T-cell (primary cell): ENCODE measurements at regions of chr13 and their contacts with region 1.

Region 1: DNA sequence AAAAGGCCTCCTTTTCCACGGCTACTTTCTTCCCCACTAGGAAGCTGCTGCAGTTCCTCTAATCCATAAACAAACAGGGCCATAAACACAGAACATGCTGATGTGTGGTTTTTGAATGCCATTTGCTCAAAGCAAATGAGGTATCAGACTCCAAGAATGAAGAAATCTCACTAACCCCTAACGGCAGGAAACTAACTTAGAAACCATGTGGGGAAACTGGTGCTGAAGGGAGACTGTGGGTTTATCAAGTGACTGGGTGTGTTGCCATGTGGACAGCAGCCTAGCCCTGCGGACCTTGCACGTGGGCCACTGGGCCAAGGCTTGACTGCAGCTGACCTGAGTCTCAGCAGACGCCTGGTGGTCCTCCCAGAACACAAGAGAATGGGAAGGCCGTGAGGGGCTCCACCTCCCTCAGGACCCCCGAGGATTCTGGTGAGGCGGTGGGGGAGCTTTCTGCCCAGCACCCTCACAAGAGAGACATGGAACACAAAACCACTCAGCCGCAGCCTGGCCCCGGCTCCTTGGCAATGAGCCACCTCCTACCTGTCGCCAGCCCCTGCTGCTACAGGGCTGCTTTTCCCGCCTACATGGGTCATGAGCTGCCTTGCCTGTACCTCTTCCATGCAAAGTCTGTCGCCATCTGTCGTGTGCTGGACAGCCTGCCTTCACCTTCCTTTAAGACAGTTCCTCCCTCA is 10.6 kb downstream of the SLC15A1 start:
- DNase-seq: no peak
- ATAC-seq: no peak
- H3K4me3 ChIP-seq: no peak overlapping the region
- H3K4me3 Mint-ChIP-seq: no peak overlapping the region
- H3K27ac ChIP-seq: no peak overlapping the region
- H3K27ac Mint-ChIP-seq: no peak overlapping the region
- H3K4me1 ChIP-seq: no peaks in the 10 kb centered on the region
- H3K4me1 Mint-ChIP-seq: no peaks in the 10 kb centered on the region
- H3K27me3 ChIP-seq: peaks cover 0 to 16% of the 10 kb centered on the region in 2 experiments
- H3K27me3 Mint-ChIP-seq: peaks cover 0 to 6% of the 10 kb centered on the region in 2 donors

Region 2: DNA sequence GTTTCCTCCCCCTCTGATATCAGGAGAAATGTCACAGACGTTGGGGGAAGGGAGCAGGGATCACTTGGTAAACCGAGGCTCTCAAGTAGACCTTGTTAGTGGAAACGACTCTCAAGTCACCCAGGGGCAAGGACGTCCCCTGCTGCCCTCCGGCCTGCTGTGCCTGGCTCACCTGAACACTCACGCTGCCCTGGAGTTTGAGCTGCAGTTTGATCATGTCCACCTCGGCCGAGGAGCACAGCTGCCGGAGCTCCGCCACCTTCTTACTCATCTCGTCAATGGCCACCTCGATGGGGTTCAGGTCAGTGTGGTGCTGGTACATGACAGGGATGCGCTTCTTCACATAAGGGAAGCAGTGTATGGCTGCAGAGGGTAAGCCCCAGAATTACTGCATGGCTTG is 58.2 kb after region 1 on chr13:
- CTCF ChIA-PET with region 1: no interaction called
- POLR2A ChIA-PET with region 1: interaction called in 1 of 2 experiments, 10 read pairs
- DNase-seq: no peak
- ATAC-seq: no peak
- H3K4me3 ChIP-seq: no peak overlapping the region
- H3K4me3 Mint-ChIP-seq: no peak overlapping the region
- H3K27ac ChIP-seq: no peak overlapping the region
- H3K27ac Mint-ChIP-seq: no peak overlapping the region
- H3K4me1 ChIP-seq: no peaks in the 10 kb centered on the region
- H3K4me1 Mint-ChIP-seq: no peaks in the 10 kb centered on the region
- H3K27me3 ChIP-seq: no peaks in the 10 kb centered on the region
- H3K27me3 Mint-ChIP-seq: no peaks in the 10 kb centered on the region